Heart right ventricle (tissue), 16 donors: ENCODE measurements at regions of chr1 and their contacts with region 1.

Region 1: GRCh38 chr1:236181059-236181458 is 38.7 kb downstream of the GPR137B start:
- DNase-seq: no peak
- ATAC-seq: no peak
- H3K4me3 ChIP-seq: no peak overlapping the region
- H3K27ac ChIP-seq: no peak overlapping the region
- H3K4me1 ChIP-seq: peaks cover 0 to 5% (median 0%) of the 10 kb centered on the region in 9 donors
- H3K27me3 ChIP-seq: no peaks in the 10 kb centered on the region
- CTCF ChIP-seq: no peak

Region 2: GRCh38 chr1:235176486-235176885 is 1004.6 kb before region 1 on chr1:
- intact Hi-C with region 1: no loop called
- DNase-seq: no peak
- ATAC-seq: no peak
- H3K4me3 ChIP-seq: no peak overlapping the region
- H3K27ac ChIP-seq: no peak overlapping the region
- H3K4me1 ChIP-seq: no peaks in the 10 kb centered on the region
- H3K27me3 ChIP-seq: no peaks in the 10 kb centered on the region
- CTCF ChIP-seq: no peak

Region 3: GRCh38 chr1:236247286-236247685 is 66.2 kb after region 1 on chr1:
- intact Hi-C with region 1: loop called in 1 of 10 experiments (anchors 10 kb)
- DNase-seq: no peak
- ATAC-seq: no peak
- H3K4me3 ChIP-seq: no peak overlapping the region
- H3K27ac ChIP-seq: no peak overlapping the region
- H3K4me1 ChIP-seq: peaks cover 0 to 11% (median 0%) of the 10 kb centered on the region in 9 donors
- H3K27me3 ChIP-seq: no peaks in the 10 kb centered on the region
- CTCF ChIP-seq: no peak